Natural killer cell (primary cell): ENCODE measurements at regions of chr7 and their contacts with region 1.

Region 1: DNA sequence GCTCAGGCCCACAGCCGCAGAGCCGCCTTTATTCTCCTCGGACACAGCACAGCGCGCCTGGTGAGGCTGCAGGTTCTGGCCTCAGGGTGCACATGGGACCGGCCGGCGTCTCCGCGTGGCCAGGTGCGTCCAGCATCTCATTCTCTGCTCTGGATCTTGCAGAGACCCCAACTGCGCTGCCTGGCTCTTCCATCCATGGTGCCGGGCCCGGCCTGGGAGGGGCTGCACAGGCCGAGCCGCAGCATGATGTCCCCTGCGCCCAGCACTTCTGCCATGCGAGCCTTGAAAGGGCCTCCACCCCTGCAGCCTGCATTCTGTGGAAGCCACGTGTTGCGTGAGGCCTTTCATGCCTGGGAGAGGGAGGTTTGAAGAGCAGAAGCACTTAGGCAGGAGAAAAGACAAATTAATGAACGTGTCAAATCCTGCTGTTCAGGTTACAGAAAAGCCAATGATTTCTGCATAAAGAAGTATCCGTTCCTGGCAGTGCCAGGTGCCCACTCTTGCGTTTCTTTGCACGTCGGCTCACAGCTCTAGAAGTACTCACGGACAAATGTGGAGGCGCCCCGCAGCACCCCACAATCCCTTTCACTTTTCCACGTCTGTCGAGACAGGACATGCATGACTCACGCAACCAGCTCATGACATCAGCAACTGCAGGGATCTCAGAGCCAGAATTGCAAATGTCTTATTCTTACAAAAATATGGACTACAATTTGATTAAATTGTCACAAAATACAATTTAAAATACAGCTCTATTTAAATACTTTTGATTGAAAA is 571.4 kb downstream of the DNAJB6 start:
- DNase-seq: no peak
- ATAC-seq: no peak
- H3K4me3 ChIP-seq: no peak overlapping the region
- H3K4me3 Mint-ChIP-seq: no peak overlapping the region
- H3K27ac ChIP-seq: no peak overlapping the region
- H3K27ac Mint-ChIP-seq: no peak overlapping the region
- H3K4me1 ChIP-seq: no peaks in the 10 kb centered on the region
- H3K4me1 Mint-ChIP-seq: no peaks in the 10 kb centered on the region
- H3K27me3 ChIP-seq: no peaks in the 10 kb centered on the region
- H3K27me3 Mint-ChIP-seq: no peaks in the 10 kb centered on the region
- CTCF ChIP-seq: no peak

Region 2: DNA sequence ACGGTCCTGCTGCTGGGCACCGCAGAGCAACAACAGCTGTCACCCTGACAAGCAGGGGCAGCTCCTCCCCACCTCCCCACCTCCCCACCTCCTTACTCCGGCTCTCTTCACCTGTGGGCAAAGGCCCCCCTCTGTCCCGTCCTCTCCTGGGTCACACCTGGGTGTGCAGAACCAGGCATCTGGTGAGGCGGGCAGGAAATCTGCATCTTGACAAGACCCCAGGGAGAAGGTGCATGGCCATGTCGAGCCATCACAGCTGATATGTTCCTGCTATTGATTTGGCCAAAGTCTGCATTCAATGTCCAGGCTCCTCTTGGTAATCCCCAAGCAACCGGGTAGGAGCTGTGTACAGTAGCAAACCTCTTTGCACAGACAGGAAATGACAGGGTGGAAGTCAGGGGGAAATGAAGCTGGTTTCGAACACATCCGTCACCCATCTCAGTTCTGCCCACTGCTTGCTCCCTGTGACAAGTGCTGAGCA is 17.2 kb before region 1 on chr7:
- intact Hi-C with region 1: loop called (anchors 1 kb)
- DNase-seq: peak in 1 of 2 donors; percentile 51
- ATAC-seq: peak in 2 of 3 donors; percentile 37 to 42
- H3K4me3 ChIP-seq: no peak overlapping the region
- H3K4me3 Mint-ChIP-seq: no peak overlapping the region
- H3K27ac ChIP-seq: no peak overlapping the region
- H3K27ac Mint-ChIP-seq: no peak overlapping the region
- H3K4me1 ChIP-seq: no peaks in the 10 kb centered on the region
- H3K4me1 Mint-ChIP-seq: peaks cover 0 to 10% of the 10 kb centered on the region in 2 donors
- H3K27me3 ChIP-seq: no peaks in the 10 kb centered on the region
- H3K27me3 Mint-ChIP-seq: peaks cover 0 to 6% of the 10 kb centered on the region in 2 donors
- CTCF ChIP-seq: no peak